ENCODE measurements at regions of chr6 and their contacts with region 1.

Region 1: DNA sequence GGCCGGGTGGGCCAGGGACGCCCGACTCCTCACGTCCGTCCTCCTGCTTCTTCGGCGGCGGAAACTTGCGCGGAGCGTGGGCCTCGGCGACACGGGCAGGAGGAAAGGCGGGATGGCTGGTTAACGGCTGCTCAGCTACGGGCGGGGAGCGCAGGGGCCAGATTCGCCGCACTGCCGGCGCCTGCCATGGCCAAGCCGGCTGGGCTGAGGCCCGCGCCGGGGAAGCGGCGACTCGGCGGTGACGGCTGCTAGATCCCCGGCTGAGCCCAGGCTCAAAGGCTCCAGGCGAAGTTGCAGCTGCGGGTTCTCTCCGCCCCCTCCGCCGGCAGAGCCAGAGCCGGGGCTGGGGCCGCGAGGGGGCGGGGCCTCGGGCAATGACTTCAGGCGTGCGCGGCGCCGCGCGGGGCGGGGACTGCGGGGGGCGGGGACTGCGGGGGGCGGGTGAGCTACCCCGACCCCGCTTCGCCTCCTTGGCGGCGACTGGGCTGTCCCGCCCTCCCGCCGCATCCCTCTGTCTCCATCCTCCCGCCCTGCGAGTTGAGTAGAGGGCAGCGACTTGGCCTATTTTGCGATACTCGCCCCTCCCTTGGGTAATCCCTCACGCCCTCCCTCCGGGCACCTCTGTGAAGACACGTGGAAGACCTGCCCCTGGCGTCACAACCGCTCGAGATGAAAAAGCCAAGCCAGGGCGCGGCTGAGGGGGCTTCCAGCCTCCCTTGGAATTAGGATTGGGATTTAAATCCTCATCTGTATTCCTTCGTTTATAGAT is at the start of gene CEP85L:
- DNase-seq: peak; percentile 86
- H3K4me3 Mint-ChIP-seq: peak within 1 kb of the TSS; percentile 85
- H3K27ac Mint-ChIP-seq: peak within 1 kb of the TSS; percentile 92
- H3K4me1 Mint-ChIP-seq: peaks cover 52% of the 10 kb centered on the region
- H3K27me3 Mint-ChIP-seq: no peaks in the 10 kb centered on the region
- total RNA-seq, gene CEP85L: 50.9 and 51.4 TPM in 2 replicates

Region 2: GRCh38 chr6:117482240-117483003 is 1169.0 kb before region 1 on chr6 and contains the start of gene DCBLD1:
- intact Hi-C with region 1: loop called (anchors 5 kb)
- DNase-seq: peak; percentile 55
- H3K4me3 Mint-ChIP-seq: peak within 1 kb of the TSS; percentile 95
- H3K27ac Mint-ChIP-seq: peak within 1 kb of the TSS; percentile 91
- H3K4me1 Mint-ChIP-seq: peaks cover 25% of the 10 kb centered on the region
- H3K27me3 Mint-ChIP-seq: peaks cover 44% of the 10 kb centered on the region
- total RNA-seq, gene DCBLD1: 3.9 and 4.5 TPM in 2 replicates

Region 3: DNA sequence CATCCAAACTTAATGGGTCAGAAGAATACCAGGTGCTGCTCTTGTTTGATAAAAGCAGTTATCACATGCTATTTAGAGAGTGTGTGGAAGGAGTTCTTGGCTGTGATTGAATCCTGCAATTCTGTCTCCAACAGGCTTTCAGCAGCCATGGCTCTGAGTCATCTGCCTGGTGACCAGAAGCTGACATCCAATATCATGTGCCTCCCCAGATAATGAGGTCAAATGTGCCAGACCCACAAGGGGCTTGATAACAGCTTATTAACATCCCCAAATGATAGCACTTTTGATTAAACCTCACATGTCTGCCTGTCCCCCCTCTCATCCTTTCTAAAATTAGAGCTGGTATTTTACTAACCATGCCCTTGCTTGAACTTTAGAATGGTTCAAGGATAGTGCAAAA is 279.1 kb before region 1 on chr6:
- intact Hi-C with region 1: no loop called
- DNase-seq: no peak
- H3K4me3 Mint-ChIP-seq: no peak overlapping the region
- H3K27ac Mint-ChIP-seq: no peak overlapping the region
- H3K4me1 Mint-ChIP-seq: no peaks in the 10 kb centered on the region
- H3K27me3 Mint-ChIP-seq: peaks cover 2% of the 10 kb centered on the region

Region 4: GRCh38 chr6:118680452-118681095 is 29.1 kb after region 1 on chr6:
- intact Hi-C with region 1: loop called (anchors 2 kb)
- DNase-seq: peak; percentile 20
- H3K4me3 Mint-ChIP-seq: peak overlapping the region; percentile 9
- H3K27ac Mint-ChIP-seq: peak overlapping the region; percentile 57
- H3K4me1 Mint-ChIP-seq: peaks cover 69% of the 10 kb centered on the region
- H3K27me3 Mint-ChIP-seq: no peaks in the 10 kb centered on the region

Region 5: GRCh38 chr6:118724211-118724610 is 72.7 kb after region 1 on chr6:
- intact Hi-C with region 1: loop called (anchors 1 kb)
- DNase-seq: no peak
- H3K4me3 Mint-ChIP-seq: peak overlapping the region; percentile 46
- H3K27ac Mint-ChIP-seq: peak overlapping the region; percentile 40
- H3K4me1 Mint-ChIP-seq: peaks cover 56% of the 10 kb centered on the region
- H3K27me3 Mint-ChIP-seq: peaks cover 2% of the 10 kb centered on the region

Region 6: DNA sequence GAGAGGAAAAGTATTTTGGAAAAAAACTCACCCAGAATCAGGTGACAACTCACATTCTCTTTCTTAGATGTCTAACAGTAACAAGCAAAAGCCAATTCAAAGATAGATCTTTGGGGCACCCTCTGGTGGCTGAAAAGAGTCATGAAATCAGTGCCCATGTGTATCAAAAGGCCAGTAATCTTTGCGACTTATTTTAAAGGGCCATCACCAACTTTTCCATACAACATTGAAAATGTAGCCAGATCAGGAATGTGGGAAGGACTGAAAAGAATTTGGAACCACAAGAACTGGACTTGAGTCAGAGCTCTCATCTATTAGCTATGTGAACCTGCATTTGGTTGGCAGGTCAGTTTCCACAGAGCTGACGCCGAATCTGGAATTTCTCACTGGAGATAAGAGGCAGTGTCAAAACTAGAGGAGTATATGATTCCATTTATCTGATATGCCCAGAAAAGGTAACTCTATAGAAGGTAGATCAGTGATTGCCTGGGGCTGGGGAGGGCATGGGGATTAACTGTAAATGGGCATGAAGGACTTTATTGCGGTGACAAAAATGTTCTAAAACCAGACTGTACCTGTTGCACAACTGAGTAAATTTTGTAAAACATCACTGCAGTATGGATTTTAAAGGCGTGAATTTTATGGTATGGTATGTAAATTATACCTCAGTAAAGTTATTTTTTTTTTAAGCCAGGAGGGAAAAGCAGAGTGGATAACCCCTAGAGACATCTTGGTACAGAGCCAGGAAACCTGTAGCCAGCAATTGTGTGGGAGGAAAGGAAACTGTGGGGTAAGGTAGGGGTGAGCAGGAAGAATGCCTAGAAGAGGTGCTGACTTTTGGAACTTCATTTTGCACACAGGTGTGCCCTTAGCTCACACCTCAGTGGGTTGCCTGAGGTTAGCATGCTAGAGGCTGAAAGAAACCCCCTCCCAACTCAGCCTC is 125.4 kb after region 1 on chr6:
- intact Hi-C with region 1: loop called (anchors 1 kb)
- DNase-seq: peak; percentile 55
- H3K4me3 Mint-ChIP-seq: no peak overlapping the region
- H3K27ac Mint-ChIP-seq: no peak overlapping the region
- H3K4me1 Mint-ChIP-seq: peaks cover 14% of the 10 kb centered on the region
- H3K27me3 Mint-ChIP-seq: peaks cover 8% of the 10 kb centered on the region

Region 7: GRCh38 chr6:118934461-118935330 is 283.2 kb after region 1 on chr6 and contains the start of gene MCM9:
- intact Hi-C with region 1: loop called (anchors 1 kb)
- DNase-seq: peak; percentile 86
- H3K4me3 Mint-ChIP-seq: peak within 1 kb of the TSS; percentile 91
- H3K27ac Mint-ChIP-seq: peak within 1 kb of the TSS; percentile 93
- H3K4me1 Mint-ChIP-seq: peaks cover 40% of the 10 kb centered on the region
- H3K27me3 Mint-ChIP-seq: no peaks in the 10 kb centered on the region
- total RNA-seq, gene MCM9: 19.8 and 24.4 TPM in 2 replicates